Activated B cell treated with CpG ODN at 0.5 μM for 24 hours (primary cell): ENCODE measurements at regions of chr6 and their contacts with region 1.

Region 1: GRCh38 chr6:127279815-127280214 is 13.2 kb downstream of the RNF146 start:
- DNase-seq: no peak
- ATAC-seq: no peak
- H3K4me3 Mint-ChIP-seq: no peak overlapping the region
- H3K27ac Mint-ChIP-seq: no peak overlapping the region
- H3K4me1 Mint-ChIP-seq: peaks cover 10% of the 10 kb centered on the region
- H3K27me3 Mint-ChIP-seq: no peaks in the 10 kb centered on the region
- CTCF ChIP-seq: no peak

Region 2: GRCh38 chr6:127243501-127243900 is 36.3 kb before region 1 on chr6:
- CTCF ChIA-PET with region 1: no interaction called
- POLR2A ChIA-PET with region 1: no interaction called
- intact Hi-C with region 1: no loop called
- DNase-seq: no peak
- ATAC-seq: no peak
- H3K4me3 Mint-ChIP-seq: no peak overlapping the region
- H3K27ac Mint-ChIP-seq: no peak overlapping the region
- H3K4me1 Mint-ChIP-seq: no peaks in the 10 kb centered on the region
- H3K27me3 Mint-ChIP-seq: peaks cover 17% of the 10 kb centered on the region
- CTCF ChIP-seq: no peak

Region 3: DNA sequence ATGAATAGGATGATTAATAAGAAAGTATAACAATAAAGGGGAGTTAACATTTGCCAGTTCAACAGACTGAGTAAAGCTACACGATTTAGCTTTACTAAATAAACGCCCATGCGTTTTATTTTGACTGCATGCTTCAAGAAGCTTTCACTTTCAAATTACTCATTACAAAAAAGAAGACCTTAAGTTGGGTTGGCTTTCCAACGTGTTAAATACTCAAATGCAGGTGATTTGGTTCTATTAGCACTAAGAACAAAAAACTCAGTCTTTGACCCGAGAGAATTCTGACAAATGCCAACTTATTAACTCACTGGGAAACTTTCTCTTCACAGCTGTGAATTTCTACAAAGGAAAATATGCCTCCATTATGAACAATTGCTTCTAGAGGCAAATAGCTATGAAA is 11.7 kb after region 1 on chr6:
- CTCF ChIA-PET with region 1: no interaction called
- POLR2A ChIA-PET with region 1: no interaction called
- intact Hi-C with region 1: loop called (anchors 1 kb)
- DNase-seq: no peak
- ATAC-seq: peak; percentile 84
- H3K4me3 Mint-ChIP-seq: peak overlapping the region; percentile 64
- H3K27ac Mint-ChIP-seq: peak overlapping the region; percentile 79
- H3K4me1 Mint-ChIP-seq: peaks cover 25% of the 10 kb centered on the region
- H3K27me3 Mint-ChIP-seq: no peaks in the 10 kb centered on the region
- CTCF ChIP-seq: no peak